Left ventricle myocardium superior (tissue), 1 donor: ENCODE measurements at regions of chr7 and their contacts with region 1.

Region 1: GRCh38 chr7:29408841-29409243 is 154.8 kb upstream of the PRR15 start:
- DNase-seq: no peak
- ATAC-seq: peak; percentile 55

Region 2: GRCh38 chr7:28921822-28922221 is 487.0 kb before region 1 on chr7:
- intact Hi-C with region 1: loop called (anchors 2 kb)
- DNase-seq: no peak
- ATAC-seq: peak; percentile 94

Region 3: GRCh38 chr7:29113384-29114103 is 295.3 kb before region 1 on chr7:
- intact Hi-C with region 1: loop called (anchors 10 kb)
- DNase-seq: no peak
- ATAC-seq: peak; percentile 32

Region 4: DNA sequence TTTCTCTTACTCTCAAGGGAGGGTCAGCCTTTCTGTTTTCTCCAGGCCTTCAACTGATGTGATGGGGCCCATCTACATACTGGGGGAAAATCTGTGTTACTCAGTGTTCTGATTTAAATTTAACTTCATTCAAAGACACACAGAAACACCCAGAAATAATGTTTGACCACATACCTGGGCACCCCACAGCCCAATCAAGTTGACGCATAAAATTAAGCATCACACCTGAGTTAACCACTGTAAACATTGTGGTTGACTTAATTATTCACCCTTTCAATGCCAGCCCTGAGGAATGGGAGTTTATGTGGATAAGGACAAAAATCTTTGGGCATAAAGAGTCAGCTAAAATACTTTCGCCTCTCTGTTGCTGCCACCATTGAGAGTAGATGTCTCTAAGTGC is 224.2 kb before region 1 on chr7:
- intact Hi-C with region 1: no loop called
- DNase-seq: no peak
- ATAC-seq: no peak

Region 5: DNA sequence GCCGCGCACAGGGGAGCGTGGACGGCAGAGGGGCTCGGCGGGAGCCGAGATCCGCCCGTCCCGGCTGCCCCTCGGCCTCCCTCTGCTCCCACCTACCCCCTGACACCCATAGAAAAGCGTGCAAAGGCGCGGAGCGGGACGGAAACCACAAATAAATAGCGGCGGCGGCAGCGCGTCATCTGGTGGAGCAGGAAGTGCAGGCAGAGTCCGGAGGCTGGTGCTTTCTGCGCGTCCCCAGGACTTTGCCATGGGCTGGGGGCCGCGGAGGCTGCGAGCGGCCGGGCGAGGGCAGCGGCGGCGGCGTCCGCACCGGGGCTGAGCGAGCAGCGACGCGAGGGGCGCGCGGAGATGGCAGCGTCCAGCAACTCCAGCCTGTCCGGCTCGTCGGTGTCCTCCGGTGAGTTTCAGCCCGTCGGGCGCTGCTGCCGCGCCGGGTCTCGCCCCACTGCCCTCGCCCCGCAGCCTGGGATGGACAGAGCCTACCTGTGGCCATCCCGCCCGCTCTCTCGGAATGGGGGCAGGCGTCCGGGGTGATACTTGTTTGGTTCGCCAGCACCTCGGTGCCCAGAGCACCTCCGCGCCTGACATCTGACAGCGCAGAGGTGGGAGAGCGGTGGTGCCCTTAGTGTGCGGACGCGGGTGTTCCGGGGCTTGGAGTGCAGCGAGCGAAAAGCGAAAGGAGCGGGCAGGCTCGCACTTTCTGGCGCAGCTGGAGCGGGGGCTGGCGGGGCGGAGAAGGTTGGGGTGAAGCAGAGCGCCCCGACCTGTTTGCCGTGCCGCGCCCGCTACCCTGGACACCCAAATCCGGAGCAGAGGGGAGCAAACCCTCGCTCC is 214.0 kb before region 1 on chr7 and contains the start of gene CHN2:
- intact Hi-C with region 1: loop called (anchors 5 kb)
- DNase-seq: peak; percentile 71
- ATAC-seq: peak; percentile 74
- total RNA-seq, gene CHN2: 32.2 TPM

Region 6: GRCh38 chr7:29289156-29290021 is 119.5 kb before region 1 on chr7:
- intact Hi-C with region 1: no loop called
- DNase-seq: peak; percentile 65
- ATAC-seq: peak; percentile 43